ENCODE measurements at regions of chr3 and their contacts with region 1.

Region 1: DNA sequence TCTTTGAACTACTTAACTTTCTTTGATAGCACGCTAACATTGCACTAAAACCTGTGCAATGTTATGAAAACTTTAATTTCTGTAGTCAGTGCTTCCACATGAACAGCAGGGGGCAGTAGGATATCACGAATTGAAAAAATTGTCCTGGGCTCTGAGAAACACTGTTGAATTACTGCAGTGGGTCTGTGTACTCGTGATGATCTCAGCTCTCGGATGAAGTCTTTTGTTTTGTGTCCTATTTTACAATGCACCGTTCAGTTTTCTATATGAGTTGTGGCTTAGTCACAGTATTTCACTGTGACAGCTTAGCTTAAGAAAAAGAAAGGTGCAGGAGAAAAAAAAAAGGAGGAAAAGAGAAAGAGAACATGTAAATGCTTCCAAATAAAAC is 141.3 kb upstream of the CCDC54 start:
- DNase-seq: peak; percentile 51 to 88
- H3K4me3 ChIP-seq: peak overlapping the region; percentile 22; the same call in 1 of the 2 replicates
- H3K27ac ChIP-seq: peak overlapping the region; percentile 23
- H3K4me1 ChIP-seq: peaks cover 33% of the 10 kb centered on the region
- H3K27me3 ChIP-seq: no peaks in the 10 kb centered on the region
- CTCF ChIP-seq: peak; percentile 99

Region 2: DNA sequence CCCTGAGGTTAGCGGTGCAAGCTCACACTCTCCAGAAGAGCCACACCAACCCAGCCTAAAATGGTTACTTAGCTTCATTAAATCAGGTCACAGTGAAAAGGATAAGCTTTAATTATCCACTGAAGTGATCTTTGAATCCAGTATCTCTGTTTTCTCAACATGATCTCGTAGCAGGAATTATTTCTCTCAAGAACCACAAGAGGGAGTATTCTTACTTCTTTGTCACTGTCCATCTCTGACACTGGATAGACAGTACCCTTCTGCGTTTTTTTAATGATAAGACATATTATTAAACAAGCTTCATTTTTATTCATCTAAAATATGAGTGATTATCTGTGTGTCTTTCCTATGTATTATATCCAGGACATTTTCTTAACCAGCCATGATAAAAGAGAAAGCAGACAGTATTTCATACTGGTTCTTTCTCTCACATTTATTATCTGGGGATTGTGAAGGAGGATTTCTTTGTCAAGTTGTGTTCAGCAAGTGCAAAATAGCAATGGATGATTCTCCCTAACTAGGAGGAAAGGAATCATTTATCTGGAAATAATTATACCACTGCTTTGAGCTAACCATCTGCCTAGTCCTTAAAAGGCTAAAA is 36.0 kb after region 1 on chr3:
- CTCF ChIA-PET with region 1: interaction called, 15 read pairs
- POLR2A ChIA-PET with region 1: no interaction called
- intact Hi-C with region 1: no loop called
- DNase-seq: peak in 1 of 2 experiments; percentile 65
- H3K4me3 ChIP-seq: no peak overlapping the region
- H3K27ac ChIP-seq: no peak overlapping the region
- H3K4me1 ChIP-seq: no peaks in the 10 kb centered on the region
- H3K27me3 ChIP-seq: no peaks in the 10 kb centered on the region
- CTCF ChIP-seq: peak; percentile 96

Region 3: GRCh38 chr3:107522510-107523288 is 286.8 kb after region 1 on chr3 and contains the start of gene BBX:
- CTCF ChIA-PET with region 1: interaction called, 3 read pairs
- POLR2A ChIA-PET with region 1: no interaction called
- intact Hi-C with region 1: loop called (anchors 1 kb)
- DNase-seq: peak; percentile 94 to 98
- H3K4me3 ChIP-seq: peak within 1 kb of the TSS; percentile 95
- H3K27ac ChIP-seq: peak within 1 kb of the TSS; percentile 58
- H3K4me1 ChIP-seq: peaks cover 23% of the 10 kb centered on the region
- H3K27me3 ChIP-seq: no peaks in the 10 kb centered on the region
- CTCF ChIP-seq: no peak
- total RNA-seq, gene BBX: 91.7 and 92.5 TPM in 2 replicates

Region 4: GRCh38 chr3:107574650-107575049 is 338.7 kb after region 1 on chr3:
- CTCF ChIA-PET with region 1: no interaction called
- POLR2A ChIA-PET with region 1: no interaction called
- intact Hi-C with region 1: no loop called
- DNase-seq: no peak
- H3K4me3 ChIP-seq: no peak overlapping the region
- H3K27ac ChIP-seq: no peak overlapping the region
- H3K4me1 ChIP-seq: no peaks in the 10 kb centered on the region
- H3K27me3 ChIP-seq: no peaks in the 10 kb centered on the region
- CTCF ChIP-seq: peak; percentile 81

Region 5: GRCh38 chr3:107740992-107741896 is 505.3 kb after region 1 on chr3:
- CTCF ChIA-PET with region 1: no interaction called
- POLR2A ChIA-PET with region 1: no interaction called
- intact Hi-C with region 1: loop called (anchors 1 kb)
- DNase-seq: no peak
- H3K4me3 ChIP-seq: no peak overlapping the region
- H3K27ac ChIP-seq: no peak overlapping the region
- H3K4me1 ChIP-seq: no peaks in the 10 kb centered on the region
- H3K27me3 ChIP-seq: no peaks in the 10 kb centered on the region
- CTCF ChIP-seq: peak; percentile 83

Region 6: DNA sequence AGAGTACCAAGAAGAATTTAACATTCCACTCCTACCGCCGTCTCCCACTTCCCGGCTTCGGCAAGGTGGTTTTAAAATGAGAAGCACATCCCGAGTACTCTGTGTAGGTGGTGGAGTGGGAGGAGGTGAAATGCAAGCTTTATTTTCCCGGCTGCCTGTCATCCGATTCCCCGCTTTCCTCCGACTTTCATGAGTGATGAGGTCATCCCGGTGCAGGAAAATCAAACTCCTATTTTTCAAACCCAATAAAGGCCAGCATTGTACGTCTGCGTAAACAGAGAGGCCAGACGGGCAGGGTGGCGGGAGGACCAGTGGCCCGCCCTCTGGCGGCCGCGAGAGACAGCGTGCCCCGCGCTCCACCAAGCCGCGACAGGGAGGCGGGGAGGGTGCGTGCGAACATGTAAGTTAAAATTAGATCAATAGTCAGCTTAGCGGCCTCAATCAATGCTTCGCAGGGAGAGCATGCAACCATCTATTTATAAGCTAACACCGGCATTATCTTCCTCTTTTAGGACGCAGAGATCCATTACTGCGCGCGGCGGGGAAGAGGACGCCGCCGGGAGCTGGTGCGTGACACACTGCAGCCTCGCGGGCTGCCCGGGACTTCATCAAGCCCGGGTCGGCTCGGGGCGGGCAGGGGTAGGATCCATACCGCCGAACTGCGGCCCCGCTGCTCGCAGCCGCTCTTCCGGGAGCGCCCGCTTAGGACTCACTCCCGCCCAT is 691.6 kb after region 1 on chr3:
- CTCF ChIA-PET with region 1: no interaction called
- POLR2A ChIA-PET with region 1: interaction called, 4 read pairs
- intact Hi-C with region 1: loop called (anchors 5 kb)
- DNase-seq: peak; percentile 74 to 79
- H3K4me3 ChIP-seq: peak overlapping the region; percentile 65
- H3K27ac ChIP-seq: no peak overlapping the region
- H3K4me1 ChIP-seq: no peaks in the 10 kb centered on the region
- H3K27me3 ChIP-seq: no peaks in the 10 kb centered on the region
- CTCF ChIP-seq: peak; percentile 99

Region 7: GRCh38 chr3:108477511-108478147 is 1241.7 kb after region 1 on chr3:
- CTCF ChIA-PET with region 1: no interaction called
- POLR2A ChIA-PET with region 1: no interaction called
- intact Hi-C with region 1: loop called (anchors 5 kb)
- DNase-seq: peak; percentile 49 to 58
- H3K4me3 ChIP-seq: no peak overlapping the region
- H3K27ac ChIP-seq: no peak overlapping the region
- H3K4me1 ChIP-seq: peaks cover 24% of the 10 kb centered on the region
- H3K27me3 ChIP-seq: no peaks in the 10 kb centered on the region
- CTCF ChIP-seq: peak; percentile 96

Region 8: DNA sequence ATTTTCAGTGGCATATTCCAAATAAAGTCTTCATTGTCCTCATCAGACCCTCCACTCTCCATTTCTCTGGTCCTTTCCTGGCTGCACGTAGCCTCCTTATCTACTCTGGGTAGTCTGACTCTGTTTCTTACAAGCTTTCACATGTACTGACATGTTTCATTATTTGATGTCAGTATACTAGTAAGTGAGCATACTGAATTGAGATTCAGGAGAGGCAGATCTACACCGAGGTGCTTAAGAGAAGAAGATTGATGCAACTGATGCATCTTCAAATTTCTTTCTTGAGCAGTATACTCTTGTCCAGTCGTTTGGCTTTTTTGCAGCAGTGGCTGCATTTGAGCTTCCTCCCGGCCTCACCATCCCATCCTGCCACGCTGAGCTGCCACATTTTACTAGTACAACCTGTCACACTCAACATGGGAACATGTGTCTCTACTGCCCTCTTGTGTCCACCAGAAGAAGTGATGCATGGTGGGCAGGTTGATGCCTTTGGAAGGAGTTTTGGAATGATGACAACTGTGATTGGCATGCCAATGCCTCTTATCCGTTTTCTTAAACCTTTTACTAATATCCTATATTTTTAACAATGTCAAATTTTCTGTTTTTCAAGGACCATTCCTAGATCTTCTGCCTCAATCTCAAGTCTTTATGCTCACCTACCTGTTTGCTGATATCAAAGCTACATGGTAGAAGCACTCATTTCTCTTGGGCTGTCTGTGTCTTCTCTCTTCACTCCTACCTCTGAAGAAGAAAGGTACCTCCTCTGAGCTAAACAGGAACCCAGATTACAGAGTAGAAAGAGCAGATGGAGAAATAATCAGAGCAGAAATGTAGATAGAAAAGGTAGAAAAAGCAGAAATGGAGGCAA is 1679.1 kb after region 1 on chr3:
- CTCF ChIA-PET with region 1: no interaction called
- POLR2A ChIA-PET with region 1: no interaction called
- intact Hi-C with region 1: loop called (anchors 2 kb)
- DNase-seq: peak; percentile 54 to 61
- H3K4me3 ChIP-seq: no peak overlapping the region
- H3K27ac ChIP-seq: no peak overlapping the region
- H3K4me1 ChIP-seq: peaks cover 6% of the 10 kb centered on the region; the same call in 1 of the 2 replicates
- H3K27me3 ChIP-seq: no peaks in the 10 kb centered on the region
- CTCF ChIP-seq: peak; percentile 99

Measured in PC-9 (cell line).